ENCODE measurements at regions of chr4 and their contacts with region 1.

Region 1: DNA sequence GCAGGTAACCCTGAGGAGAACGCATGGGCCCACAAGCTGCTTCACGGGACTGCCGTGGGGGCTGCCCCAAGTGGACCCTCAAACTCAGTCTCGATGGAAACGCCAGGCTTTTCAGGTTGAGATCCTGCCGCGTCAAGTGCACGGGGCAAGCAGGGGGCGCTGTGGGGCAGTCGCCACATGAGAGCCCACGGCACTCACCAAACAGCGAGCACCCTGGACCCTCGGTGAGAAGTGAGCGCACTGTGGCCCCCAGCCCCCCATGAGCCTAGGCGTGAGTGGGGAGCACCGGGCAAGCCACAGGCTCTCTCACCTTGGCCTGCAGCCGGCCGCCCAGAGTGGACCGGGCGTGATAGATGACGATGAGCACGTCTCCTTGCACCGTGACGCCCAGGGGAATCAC is 50.9 kb upstream of the CPLX1 start:
- DNase-seq: no peak
- H3K4me3 Mint-ChIP-seq: no peak overlapping the region
- H3K27ac Mint-ChIP-seq: peak overlapping the region; percentile 38
- H3K4me1 Mint-ChIP-seq: peaks cover 29% of the 10 kb centered on the region
- H3K27me3 Mint-ChIP-seq: no peaks in the 10 kb centered on the region

Region 2: DNA sequence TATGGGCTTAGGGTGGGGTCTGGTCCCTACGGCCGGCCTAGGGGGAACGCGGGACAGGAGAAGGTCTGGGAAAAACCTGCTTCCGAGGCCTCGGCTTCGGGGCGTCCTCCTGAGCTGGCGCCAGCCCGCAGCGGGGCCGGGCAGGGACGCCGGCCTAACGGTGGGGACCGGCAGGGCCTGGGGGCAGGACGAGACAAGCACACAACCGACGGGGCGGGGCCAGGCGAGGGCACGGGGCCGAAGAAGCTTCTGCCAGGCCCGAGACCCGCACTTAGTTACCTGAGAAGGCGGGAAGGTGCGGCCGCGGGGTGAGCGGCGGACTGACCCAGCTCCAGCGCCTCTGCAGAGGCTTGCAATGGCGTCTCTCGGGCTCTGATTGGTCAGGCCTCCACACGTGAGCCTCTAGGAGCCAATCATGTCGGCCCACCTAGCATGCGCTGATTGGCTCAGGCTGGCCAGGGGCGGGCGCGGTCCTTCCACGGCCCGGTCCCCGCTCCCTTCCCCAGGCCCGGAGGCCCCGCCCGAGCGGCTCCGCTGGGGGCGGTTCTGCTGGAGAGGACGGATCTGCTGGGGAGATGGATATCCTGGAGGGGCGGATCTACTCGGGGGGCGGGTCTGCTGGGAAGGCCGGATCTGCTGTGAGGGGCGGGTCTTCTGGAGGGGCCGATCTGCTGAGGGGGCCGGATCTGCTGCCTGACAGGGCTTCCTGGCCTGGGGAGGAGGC is 95.1 kb before region 1 on chr4:
- intact Hi-C with region 1: loop called (anchors 5 kb)
- DNase-seq: peak; percentile 100
- H3K4me3 Mint-ChIP-seq: peak overlapping the region; percentile 88
- H3K27ac Mint-ChIP-seq: peak overlapping the region; percentile 95
- H3K4me1 Mint-ChIP-seq: peaks cover 41% of the 10 kb centered on the region
- H3K27me3 Mint-ChIP-seq: peaks cover 15% of the 10 kb centered on the region

Region 3: GRCh38 chr4:924107-925096 is 47.6 kb after region 1 on chr4:
- intact Hi-C with region 1: loop called (anchors 1 kb)
- DNase-seq: no peak
- H3K4me3 Mint-ChIP-seq: peak overlapping the region; percentile 24
- H3K27ac Mint-ChIP-seq: peak overlapping the region; percentile 90
- H3K4me1 Mint-ChIP-seq: peaks cover 41% of the 10 kb centered on the region
- H3K27me3 Mint-ChIP-seq: no peaks in the 10 kb centered on the region

Region 4: GRCh38 chr4:973431-974397 is 96.9 kb after region 1 on chr4 and contains the start of gene DGKQ:
- intact Hi-C with region 1: loop called (anchors 1 kb)
- DNase-seq: peak; percentile 95
- H3K4me3 Mint-ChIP-seq: peak within 1 kb of the TSS; percentile 67
- H3K27ac Mint-ChIP-seq: no peak within 1 kb of the TSS
- H3K4me1 Mint-ChIP-seq: peaks cover 5% of the 10 kb centered on the region
- H3K27me3 Mint-ChIP-seq: no peaks in the 10 kb centered on the region
- total RNA-seq, gene DGKQ: 15.2 and 16.6 TPM in 2 replicates